IMR-90 (cell line): ENCODE measurements at regions of chr14 and their contacts with region 1.

Region 1: GRCh38 chr14:45267071-45267470 is 14.1 kb upstream of the MIS18BP1 start:
- DNase-seq: no peak
- ATAC-seq: no peak
- H3K4me3 ChIP-seq: no peak overlapping the region
- H3K27ac ChIP-seq: no peak overlapping the region
- H3K4me1 ChIP-seq: no peaks in the 10 kb centered on the region
- H3K27me3 ChIP-seq: peaks cover 2% of the 10 kb centered on the region; the same call in 1 of the 2 replicates
- CTCF ChIP-seq: no peak
- POLR2A ChIP-seq: no peak
- RAD21 ChIP-seq: no peak

Region 2: GRCh38 chr14:44912041-44912869 is 354.8 kb before region 1 on chr14:
- CTCF ChIA-PET with region 1: interaction called, 18 read pairs
- POLR2A ChIA-PET with region 1: no interaction called
- dilution Hi-C with region 1: no loop called
- in situ Hi-C with region 1: loop called (anchors 5 kb)
- intact Hi-C with region 1: loop called (anchors 1 kb)
- DNase-seq: no peak
- ATAC-seq: peak; percentile 30; the same call in 1 of the 2 replicates
- H3K4me3 ChIP-seq: peak overlapping the region; percentile 29; the same call in 1 of the 2 replicates
- H3K27ac ChIP-seq: no peak overlapping the region
- H3K4me1 ChIP-seq: 0 out of 2 replicates have a peak, but pooled peaks cover 1% of the 10 kb centered on the region
- H3K27me3 ChIP-seq: peaks cover 5% of the 10 kb centered on the region; the same call in 1 of the 2 replicates
- CTCF ChIP-seq: no peak
- POLR2A ChIP-seq: no peak
- RAD21 ChIP-seq: no peak

Region 3: DNA sequence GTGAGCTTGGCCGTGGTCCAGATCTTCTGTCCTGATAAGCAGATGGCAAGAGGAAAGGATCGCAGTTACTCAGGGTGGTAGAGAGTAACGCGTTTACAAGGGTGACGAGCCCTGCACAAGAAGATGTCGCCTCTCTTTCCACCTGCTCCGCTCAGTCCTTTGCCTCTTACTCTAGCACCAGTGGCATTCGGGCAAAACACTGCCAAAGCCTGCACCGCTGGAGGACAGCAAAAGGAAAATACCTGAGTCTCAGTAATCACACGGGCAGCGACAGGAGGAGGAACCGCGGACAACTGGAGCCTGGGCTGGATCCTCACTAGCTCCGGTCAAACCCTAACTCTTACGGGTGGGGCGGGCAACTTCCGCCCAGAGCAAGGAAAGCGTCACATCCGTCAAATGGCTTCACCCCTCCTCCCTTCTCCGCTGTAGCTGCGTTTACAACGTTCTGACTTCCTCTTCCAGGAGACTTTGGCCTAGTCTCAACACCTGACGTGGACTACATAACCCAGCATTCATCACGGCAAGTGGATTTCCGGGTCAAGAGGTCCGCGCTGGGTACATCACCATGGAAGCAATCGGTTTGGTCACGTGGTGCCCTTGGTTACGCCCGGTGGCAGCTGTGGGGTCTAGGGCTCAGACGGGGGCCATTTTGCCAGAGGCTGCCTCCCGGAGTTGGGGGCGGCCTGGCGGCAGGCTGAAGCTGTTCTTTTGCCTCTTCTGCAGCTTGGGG is 305.3 kb before region 1 on chr14 and contains the starts of genes KLHL28 and TOGARAM1:
- CTCF ChIA-PET with region 1: no interaction called
- POLR2A ChIA-PET with region 1: no interaction called
- dilution Hi-C with region 1: no loop called
- in situ Hi-C with region 1: no loop called
- intact Hi-C with region 1: loop called (anchors 5 kb)
- DNase-seq: peak; percentile 100
- ATAC-seq: peak; percentile 88
- H3K4me3 ChIP-seq: peak within 1 kb of the TSS; percentile 68
- H3K27ac ChIP-seq: peak within 1 kb of the TSS; percentile 65
- H3K4me1 ChIP-seq: peaks cover 3% of the 10 kb centered on the region; the same call in 1 of the 2 replicates
- H3K27me3 ChIP-seq: no peaks in the 10 kb centered on the region
- CTCF ChIP-seq: no peak
- POLR2A ChIP-seq: peak; percentile 93
- RAD21 ChIP-seq: no peak
- total RNA-seq, gene KLHL28: 7.7 and 11.4 TPM in 2 replicates
- total RNA-seq, gene TOGARAM1: 11.1 and 13.4 TPM in 2 replicates

Region 4: GRCh38 chr14:45070215-45070614 is 196.9 kb before region 1 on chr14:
- CTCF ChIA-PET with region 1: no interaction called
- POLR2A ChIA-PET with region 1: no interaction called
- dilution Hi-C with region 1: no loop called
- in situ Hi-C with region 1: no loop called
- intact Hi-C with region 1: no loop called
- DNase-seq: peak; percentile 10
- ATAC-seq: no peak
- H3K4me3 ChIP-seq: no peak overlapping the region
- H3K27ac ChIP-seq: no peak overlapping the region
- H3K4me1 ChIP-seq: no peaks in the 10 kb centered on the region
- H3K27me3 ChIP-seq: no peaks in the 10 kb centered on the region
- CTCF ChIP-seq: no peak
- POLR2A ChIP-seq: no peak
- RAD21 ChIP-seq: no peak

Region 5: GRCh38 chr14:45089813-45090212 is 177.3 kb before region 1 on chr14:
- CTCF ChIA-PET with region 1: no interaction called
- POLR2A ChIA-PET with region 1: no interaction called
- dilution Hi-C with region 1: no loop called
- in situ Hi-C with region 1: no loop called
- intact Hi-C with region 1: loop called (anchors 5 kb)
- DNase-seq: peak; percentile 61
- ATAC-seq: peak; percentile 52; the same call in 1 of the 2 replicates
- H3K4me3 ChIP-seq: no peak overlapping the region
- H3K27ac ChIP-seq: no peak overlapping the region
- H3K4me1 ChIP-seq: peaks cover 2% of the 10 kb centered on the region; the same call in 1 of the 2 replicates
- H3K27me3 ChIP-seq: no peaks in the 10 kb centered on the region
- CTCF ChIP-seq: no peak
- POLR2A ChIP-seq: no peak
- RAD21 ChIP-seq: no peak

Region 6: DNA sequence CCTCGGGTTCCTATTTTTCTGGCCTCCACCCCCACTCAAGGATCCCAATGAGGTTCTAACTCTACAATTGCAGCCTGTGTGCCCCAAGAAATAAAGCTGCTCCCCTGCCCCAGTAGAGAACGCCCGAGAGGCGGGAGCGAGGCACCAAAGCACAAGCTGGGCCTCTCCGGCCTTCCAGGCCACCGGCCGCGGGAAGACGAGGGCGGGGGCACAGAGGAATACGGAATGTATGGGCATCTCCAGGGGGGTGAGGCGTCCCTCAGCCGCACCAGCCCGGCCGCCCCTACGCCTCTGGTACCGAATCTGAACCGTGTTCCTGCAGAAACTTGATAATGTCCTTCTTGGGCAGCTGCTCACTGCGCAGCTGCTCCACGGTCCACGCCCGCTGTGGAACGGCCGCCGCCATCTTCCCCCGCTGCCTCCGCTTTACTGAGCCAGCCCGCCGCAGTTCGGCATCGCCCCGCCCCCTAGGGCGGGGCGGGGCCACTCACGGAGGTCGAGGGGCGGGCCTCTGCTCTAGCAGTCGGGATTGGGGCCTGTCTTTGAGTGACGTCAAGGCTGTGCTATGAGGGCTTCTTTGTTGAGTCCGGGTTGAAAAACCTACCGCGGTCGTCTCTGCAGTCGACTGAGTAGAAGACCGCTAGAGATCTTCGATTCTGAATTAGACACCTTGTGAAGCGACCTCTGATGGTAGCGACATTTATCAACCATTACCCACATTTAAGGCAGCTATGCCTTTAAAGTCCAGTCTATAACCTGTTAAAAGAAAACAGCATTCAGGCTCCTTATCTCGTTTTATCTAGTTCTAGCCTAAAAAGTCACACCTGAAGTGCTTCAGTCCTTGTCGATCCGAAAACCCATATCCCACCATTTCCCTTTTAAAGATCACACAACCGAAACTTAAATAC is 132.8 kb before region 1 on chr14 and contains the start of gene FKBP3:
- CTCF ChIA-PET with region 1: interaction called, 3 read pairs
- POLR2A ChIA-PET with region 1: no interaction called
- dilution Hi-C with region 1: no loop called
- in situ Hi-C with region 1: no loop called
- intact Hi-C with region 1: loop called (anchors 2 kb)
- DNase-seq: peak; percentile 99
- ATAC-seq: peak; percentile 96
- H3K4me3 ChIP-seq: peak within 1 kb of the TSS; percentile 91
- H3K27ac ChIP-seq: peak within 1 kb of the TSS; percentile 89
- H3K4me1 ChIP-seq: no peaks in the 10 kb centered on the region
- H3K27me3 ChIP-seq: no peaks in the 10 kb centered on the region
- CTCF ChIP-seq: 0 out of 2 replicates have a peak, but pooled peaks have one; percentile 16
- POLR2A ChIP-seq: peak; percentile 72
- RAD21 ChIP-seq: no peak; the same call in 1 of the 2 replicates
- total RNA-seq, gene FKBP3: 8.6 and 31.1 TPM in 2 replicates

Region 7: DNA sequence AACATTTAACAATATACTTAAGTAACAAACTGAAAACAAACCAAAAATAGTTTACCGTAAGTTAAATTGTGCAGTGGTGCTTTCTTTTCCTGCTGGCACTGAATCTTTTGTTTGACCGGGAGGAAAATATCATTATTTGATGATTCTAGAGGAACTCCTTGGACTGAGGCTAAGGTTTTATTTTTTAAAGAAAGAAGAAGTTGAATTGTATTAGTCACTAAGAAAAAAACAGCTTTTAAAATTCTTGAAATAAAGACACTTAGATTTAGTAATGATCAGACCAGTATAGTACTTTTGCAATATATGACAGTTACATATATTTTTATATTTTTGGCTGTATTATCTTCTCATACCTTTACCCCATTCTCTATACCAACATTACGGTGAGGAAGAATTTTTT is 24.4 kb before region 1 on chr14:
- CTCF ChIA-PET with region 1: no interaction called
- POLR2A ChIA-PET with region 1: no interaction called
- dilution Hi-C with region 1: no loop called
- in situ Hi-C with region 1: no loop called
- intact Hi-C with region 1: no loop called
- DNase-seq: no peak
- ATAC-seq: no peak
- H3K4me3 ChIP-seq: no peak overlapping the region
- H3K27ac ChIP-seq: no peak overlapping the region
- H3K4me1 ChIP-seq: no peaks in the 10 kb centered on the region
- H3K27me3 ChIP-seq: no peaks in the 10 kb centered on the region
- CTCF ChIP-seq: no peak
- POLR2A ChIP-seq: no peak
- RAD21 ChIP-seq: no peak